Naive thymus-derived CD4-positive, alpha-beta T cell (primary cell): ENCODE measurements at regions of chr9 and their contacts with region 1.

Region 1: DNA sequence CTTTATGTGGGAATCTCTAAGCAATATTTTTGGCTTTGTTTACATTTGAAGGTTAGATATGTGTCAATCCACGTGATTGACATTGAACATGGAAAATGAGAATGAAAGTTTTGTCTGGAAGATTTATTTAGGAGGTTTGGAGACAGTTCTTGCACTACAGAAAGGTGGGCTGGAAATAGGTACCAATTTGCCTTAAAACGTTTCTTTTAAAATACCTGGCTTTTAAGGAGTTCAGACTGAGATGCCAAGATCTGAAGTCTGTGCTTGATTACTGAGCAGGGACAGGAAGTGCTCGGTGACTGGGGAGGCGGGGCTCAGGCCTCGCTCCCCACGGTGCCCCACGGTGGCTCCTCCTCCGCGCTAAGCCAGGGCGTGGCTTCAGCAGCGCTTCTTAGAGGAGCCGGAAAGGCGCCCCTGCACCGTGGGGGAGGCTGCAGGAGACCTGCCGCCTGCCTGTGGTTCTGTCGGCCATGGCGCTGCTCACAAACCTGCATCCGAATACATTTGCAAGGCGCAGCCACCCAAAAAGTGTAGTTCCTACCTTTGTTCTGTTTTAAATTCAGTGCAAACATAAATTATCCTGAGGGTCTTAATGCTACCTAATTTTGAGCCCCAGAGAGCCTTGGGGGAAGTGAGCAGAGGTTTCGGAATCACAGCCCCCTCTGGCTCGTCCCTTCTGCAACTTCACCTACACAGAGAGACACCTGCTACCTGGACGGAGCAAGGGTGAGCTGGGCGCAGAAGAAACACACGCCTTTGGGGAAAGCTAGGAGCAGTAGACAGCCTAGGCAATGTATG is 49.2 kb downstream of the USP20 start:
- DNase-seq: peak; percentile 86 to 97 (median 96)
- ATAC-seq: peak; percentile 69
- H3K4me3 ChIP-seq: peak overlapping the region; percentile 58
- H3K4me3 Mint-ChIP-seq: peak overlapping the region; percentile 85 to 98 (median 94)
- H3K27ac ChIP-seq: peak overlapping the region; percentile 99
- H3K27ac Mint-ChIP-seq: peak overlapping the region; percentile 97 to 100 (median 100)
- H3K4me1 ChIP-seq: peaks cover 20 to 37% of the 10 kb centered on the region in 2 donors
- H3K4me1 Mint-ChIP-seq: peaks cover 37 to 57% (median 48%) of the 10 kb centered on the region in 7 donors
- H3K27me3 ChIP-seq: no peaks in the 10 kb centered on the region
- H3K27me3 Mint-ChIP-seq: peaks cover 0 to 4% (median 0%) of the 10 kb centered on the region in 5 donors

Region 2: DNA sequence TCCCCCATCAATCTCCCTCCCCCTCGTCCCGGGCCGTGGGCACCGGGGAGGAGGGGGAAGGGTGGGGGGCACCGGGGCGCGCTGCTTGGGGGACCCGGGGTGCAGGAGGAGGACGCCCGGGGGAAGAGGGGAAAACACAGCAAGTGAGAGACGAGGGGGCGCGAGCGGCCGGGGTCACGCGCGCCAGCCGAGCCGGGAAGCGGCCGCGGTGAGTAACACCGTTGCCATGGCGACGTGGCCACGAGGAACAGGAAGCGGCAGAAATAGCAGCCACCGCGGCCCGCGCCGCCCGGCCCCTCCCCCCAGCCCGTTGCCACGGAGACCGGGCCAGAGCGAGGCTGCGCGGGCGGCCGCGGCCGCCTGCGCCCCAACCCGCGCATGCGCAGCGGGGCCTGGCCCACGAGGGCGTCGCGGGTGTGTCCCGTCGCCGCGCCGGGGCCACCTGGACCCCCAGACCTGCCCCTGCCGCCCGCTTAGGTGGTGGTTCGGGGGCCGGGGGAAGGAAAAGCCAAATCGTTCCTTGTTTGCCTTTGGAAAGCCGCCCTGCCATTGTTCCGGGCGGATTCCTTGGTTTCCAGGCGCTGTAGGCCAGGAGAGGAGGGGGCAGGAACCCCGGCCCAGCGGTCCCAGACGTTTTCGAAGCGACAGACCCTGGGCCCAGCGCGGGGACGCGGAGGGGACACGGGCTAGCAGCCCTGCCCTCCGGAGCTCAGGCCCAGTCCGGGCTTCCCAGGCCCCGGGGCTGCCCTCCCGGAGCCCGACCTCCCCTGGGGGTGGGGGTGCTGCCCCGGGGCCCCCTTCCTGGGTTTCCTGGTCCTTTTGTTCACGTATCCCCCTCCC is 470.7 kb before region 1 on chr9:
- CTCF ChIA-PET with region 1: no interaction called
- POLR2A ChIA-PET with region 1: no interaction called
- intact Hi-C with region 1: loop called in 1 of 2 experiments (anchors 5 kb)
- DNase-seq: peak; percentile 95 to 100 (median 98)
- ATAC-seq: peak; percentile 89
- H3K4me3 ChIP-seq: peak overlapping the region; percentile 76
- H3K4me3 Mint-ChIP-seq: peak overlapping the region; percentile 84 to 94 (median 90)
- H3K27ac ChIP-seq: peak overlapping the region; percentile 100
- H3K27ac Mint-ChIP-seq: peak overlapping the region; percentile 95 to 100 (median 99)
- H3K4me1 ChIP-seq: peaks cover 17 to 20% of the 10 kb centered on the region in 2 donors
- H3K4me1 Mint-ChIP-seq: peaks cover 5 to 43% (median 33%) of the 10 kb centered on the region in 7 donors
- H3K27me3 ChIP-seq: no peaks in the 10 kb centered on the region
- H3K27me3 Mint-ChIP-seq: peaks cover 0 to 2% (median 0%) of the 10 kb centered on the region in 5 donors

Region 3: GRCh38 chr9:129542741-129543140 is 341.7 kb before region 1 on chr9:
- CTCF ChIA-PET with region 1: no interaction called
- POLR2A ChIA-PET with region 1: no interaction called
- intact Hi-C with region 1: no loop called
- DNase-seq: no peak
- ATAC-seq: no peak
- H3K4me3 ChIP-seq: no peak overlapping the region
- H3K4me3 Mint-ChIP-seq: no peak overlapping the region
- H3K27ac ChIP-seq: no peak overlapping the region
- H3K27ac Mint-ChIP-seq: no peak overlapping the region
- H3K4me1 ChIP-seq: no peaks in the 10 kb centered on the region
- H3K4me1 Mint-ChIP-seq: no peaks in the 10 kb centered on the region
- H3K27me3 ChIP-seq: no peaks in the 10 kb centered on the region
- H3K27me3 Mint-ChIP-seq: peaks cover 5 to 54% (median 14%) of the 10 kb centered on the region in 5 donors

Region 4: GRCh38 chr9:129802851-129803675 is 81.4 kb before region 1 on chr9 and contains the start of gene TOR1B:
- CTCF ChIA-PET with region 1: no interaction called
- POLR2A ChIA-PET with region 1: interaction called, 3 read pairs
- intact Hi-C with region 1: loop called in 1 of 2 experiments (anchors 1 kb)
- DNase-seq: peak; percentile 91 to 97 (median 94)
- ATAC-seq: peak; percentile 97
- H3K4me3 ChIP-seq: peak within 1 kb of the TSS; percentile 73
- H3K4me3 Mint-ChIP-seq: peak within 1 kb of the TSS; percentile 87 to 95 (median 90)
- H3K27ac ChIP-seq: peak within 1 kb of the TSS; percentile 79
- H3K27ac Mint-ChIP-seq: peak within 1 kb of the TSS; percentile 85 to 97 (median 94)
- H3K4me1 ChIP-seq: peaks cover 12 to 20% of the 10 kb centered on the region in 2 donors
- H3K4me1 Mint-ChIP-seq: peaks cover 15 to 34% (median 28%) of the 10 kb centered on the region in 7 donors
- H3K27me3 ChIP-seq: no peaks in the 10 kb centered on the region
- H3K27me3 Mint-ChIP-seq: no peaks in the 10 kb centered on the region
- total RNA-seq, gene TOR1B: 16.2 to 30.9 (median 23.9) TPM

Region 5: GRCh38 chr9:129868916-129869486 is 15.4 kb before region 1 on chr9:
- CTCF ChIA-PET with region 1: interaction called, 9 read pairs
- POLR2A ChIA-PET with region 1: interaction called, 202 read pairs
- intact Hi-C with region 1: loop called (anchors 1 kb)
- DNase-seq: peak; percentile 67 to 95 (median 94)
- ATAC-seq: peak; percentile 93
- H3K4me3 ChIP-seq: peak overlapping the region; percentile 57
- H3K4me3 Mint-ChIP-seq: peak overlapping the region; percentile 49 to 77 (median 64)
- H3K27ac ChIP-seq: peak overlapping the region; percentile 87
- H3K27ac Mint-ChIP-seq: peak overlapping the region; percentile 88 to 96 (median 94)
- H3K4me1 ChIP-seq: peaks cover 59 to 73% of the 10 kb centered on the region in 2 donors
- H3K4me1 Mint-ChIP-seq: peaks cover 44 to 93% (median 77%) of the 10 kb centered on the region in 7 donors
- H3K27me3 ChIP-seq: no peaks in the 10 kb centered on the region
- H3K27me3 Mint-ChIP-seq: no peaks in the 10 kb centered on the region

Region 6: GRCh38 chr9:129944506-129945116 is 60.2 kb after region 1 on chr9:
- CTCF ChIA-PET with region 1: interaction called, 9 read pairs
- POLR2A ChIA-PET with region 1: interaction called, 24 read pairs
- intact Hi-C with region 1: loop called (anchors 1 to 2 kb)
- DNase-seq: peak in 8 of 9 donors; percentile 38 to 78 (median 70)
- ATAC-seq: peak; percentile 96
- H3K4me3 ChIP-seq: peak overlapping the region; percentile 20
- H3K4me3 Mint-ChIP-seq: peak overlapping the region; percentile 8 to 76 (median 64)
- H3K27ac ChIP-seq: peak overlapping the region; percentile 49
- H3K27ac Mint-ChIP-seq: peak overlapping the region; percentile 68 to 94 (median 85)
- H3K4me1 ChIP-seq: peaks cover 36 to 47% of the 10 kb centered on the region in 2 donors
- H3K4me1 Mint-ChIP-seq: peaks cover 35 to 75% (median 60%) of the 10 kb centered on the region in 7 donors
- H3K27me3 ChIP-seq: no peaks in the 10 kb centered on the region
- H3K27me3 Mint-ChIP-seq: no peaks in the 10 kb centered on the region

Region 7: GRCh38 chr9:130053504-130054324 is 169.3 kb after region 1 on chr9 and contains the start of gene GPR107:
- CTCF ChIA-PET with region 1: interaction called, 3 read pairs
- POLR2A ChIA-PET with region 1: interaction called, 13 read pairs
- intact Hi-C with region 1: no loop called
- DNase-seq: peak; percentile 68 to 88 (median 73)
- ATAC-seq: peak; percentile 98
- H3K4me3 ChIP-seq: peak within 1 kb of the TSS; percentile 92
- H3K4me3 Mint-ChIP-seq: peak within 1 kb of the TSS; percentile 90 to 96 (median 94)
- H3K27ac ChIP-seq: peak within 1 kb of the TSS; percentile 96
- H3K27ac Mint-ChIP-seq: peak within 1 kb of the TSS; percentile 92 to 95 (median 94)
- H3K4me1 ChIP-seq: peaks cover 13% of the 10 kb centered on the region in 2 donors
- H3K4me1 Mint-ChIP-seq: peaks cover 6 to 44% (median 31%) of the 10 kb centered on the region in 7 donors
- H3K27me3 ChIP-seq: no peaks in the 10 kb centered on the region
- H3K27me3 Mint-ChIP-seq: no peaks in the 10 kb centered on the region
- total RNA-seq, gene GPR107: 21.6 to 24.0 (median 22.8) TPM